CD4-positive, alpha-beta T cell (primary cell): ENCODE measurements at regions of chr9 and their contacts with region 1.

Region 1: GRCh38 chr9:97921959-97922724 is at the start of gene TRMO:
- DNase-seq: peak; percentile 96 to 100 (median 98)
- ATAC-seq: peak; percentile 76
- H3K4me3 ChIP-seq: peak within 1 kb of the TSS; percentile 76
- H3K4me3 Mint-ChIP-seq: peak within 1 kb of the TSS; percentile 88
- H3K27ac ChIP-seq: peak within 1 kb of the TSS; percentile 99
- H3K27ac Mint-ChIP-seq: peak within 1 kb of the TSS; percentile 96
- H3K4me1 ChIP-seq: peaks cover 43% of the 10 kb centered on the region
- H3K4me1 Mint-ChIP-seq: peaks cover 59% of the 10 kb centered on the region
- H3K27me3 ChIP-seq: no peaks in the 10 kb centered on the region
- H3K27me3 Mint-ChIP-seq: peaks cover 3% of the 10 kb centered on the region
- CTCF ChIP-seq: peak; percentile 67
- total RNA-seq, gene TRMO: 42.8 to 45.8 TPM

Region 2: DNA sequence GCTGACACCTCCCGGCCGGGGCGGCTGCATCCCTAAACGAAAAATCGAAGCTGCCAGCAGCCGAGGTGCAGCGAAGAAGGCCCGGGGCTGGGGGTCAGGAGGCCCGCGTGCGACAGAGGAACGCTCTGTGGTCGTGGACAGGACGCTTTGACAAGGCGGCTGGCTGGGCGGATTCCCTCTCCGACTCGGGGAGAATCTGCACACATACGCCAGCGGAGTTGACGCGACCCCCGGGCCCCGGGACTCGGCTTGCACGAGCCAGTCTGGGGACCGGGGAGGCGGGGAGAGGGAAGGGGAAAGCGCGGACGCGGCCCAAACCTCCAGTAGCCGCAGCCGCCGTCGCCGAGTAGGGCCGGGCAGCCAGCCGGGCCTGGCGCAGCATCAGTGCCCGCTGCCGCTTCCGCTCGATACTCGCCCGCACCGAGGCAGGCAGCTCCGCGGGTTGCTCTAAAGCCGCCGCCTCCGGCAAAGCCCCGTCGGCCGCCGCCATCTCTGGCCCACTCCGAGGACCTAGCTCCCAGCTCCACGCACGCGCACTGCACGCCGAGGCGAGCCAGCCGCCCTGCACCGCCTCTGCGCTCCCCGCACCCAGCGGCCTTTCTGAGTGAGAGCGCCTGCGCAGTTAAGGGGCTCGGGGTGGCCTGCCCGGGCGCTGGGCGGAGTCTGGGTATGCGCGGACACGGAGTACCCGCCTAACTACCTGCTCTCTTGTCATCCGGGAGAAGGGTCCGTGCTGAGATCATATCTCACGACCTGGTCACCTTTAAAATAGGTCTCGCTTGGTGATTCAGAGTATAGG is 225.1 kb before region 1 on chr9 and contains the start of gene XPA:
- CTCF ChIA-PET with region 1: interaction called, 6 read pairs
- POLR2A ChIA-PET with region 1: interaction called, 25 read pairs
- intact Hi-C with region 1: no loop called
- DNase-seq: peak; percentile 94 to 99 (median 97)
- ATAC-seq: peak; percentile 92
- H3K4me3 ChIP-seq: peak within 1 kb of the TSS; percentile 83
- H3K4me3 Mint-ChIP-seq: peak within 1 kb of the TSS; percentile 87
- H3K27ac ChIP-seq: peak within 1 kb of the TSS; percentile 80 to 81
- H3K27ac Mint-ChIP-seq: peak within 1 kb of the TSS; percentile 86
- H3K4me1 ChIP-seq: peaks cover 26% of the 10 kb centered on the region
- H3K4me1 Mint-ChIP-seq: peaks cover 62% of the 10 kb centered on the region
- H3K27me3 ChIP-seq: no peaks in the 10 kb centered on the region
- H3K27me3 Mint-ChIP-seq: peaks cover 4% of the 10 kb centered on the region
- CTCF ChIP-seq: no peak
- total RNA-seq, gene XPA: 20.2 to 23.3 TPM

Region 3: DNA sequence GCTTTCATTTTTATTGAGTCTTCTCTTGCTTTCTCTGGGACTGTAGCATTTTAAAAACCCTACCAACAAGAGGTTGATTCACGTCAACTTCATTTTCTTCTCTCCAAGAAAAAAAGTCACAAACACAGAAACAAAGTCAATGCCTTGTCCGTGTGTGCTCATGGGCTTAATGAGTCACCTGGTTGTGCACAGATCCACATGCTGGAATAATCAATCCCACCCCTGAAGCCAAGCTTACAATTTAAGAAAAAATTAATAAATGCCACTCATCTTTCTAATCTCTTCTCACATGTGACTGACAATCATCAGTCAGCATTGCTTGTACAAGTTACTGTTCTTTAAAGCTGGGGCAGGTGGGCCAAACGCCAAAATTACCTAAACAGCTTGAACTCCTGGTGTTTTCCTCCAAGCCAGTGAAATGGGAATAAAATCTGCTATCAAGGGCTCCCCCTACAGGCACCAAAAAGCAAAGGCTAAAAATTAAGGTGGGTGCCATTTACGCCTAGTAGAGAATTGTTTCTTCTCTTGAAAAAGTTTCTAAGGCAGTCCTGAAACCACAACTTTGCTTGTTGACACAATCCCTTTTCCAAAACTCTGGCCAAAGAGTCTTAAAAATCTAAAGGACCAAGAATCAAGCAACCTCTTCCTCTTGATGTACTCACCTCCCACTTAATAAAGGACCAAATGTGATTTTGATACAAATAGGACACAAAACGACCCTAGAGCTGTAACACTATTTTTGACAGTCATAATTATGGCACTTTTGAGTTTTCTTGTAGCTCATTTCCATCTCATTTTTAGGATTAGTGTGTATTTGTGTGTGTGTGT is 21.2 kb before region 1 on chr9:
- CTCF ChIA-PET with region 1: interaction called, 221 read pairs
- POLR2A ChIA-PET with region 1: interaction called, 335 read pairs
- intact Hi-C with region 1: loop called (anchors 1 to 2 kb)
- DNase-seq: peak in 4 of 14 experiments; percentile 57 to 79 (median 70)
- ATAC-seq: no peak
- H3K4me3 ChIP-seq: no peak overlapping the region
- H3K4me3 Mint-ChIP-seq: peak overlapping the region; percentile 22
- H3K27ac ChIP-seq: peak overlapping the region in 1 of 2 donors; percentile 7
- H3K27ac Mint-ChIP-seq: peak overlapping the region; percentile 96
- H3K4me1 ChIP-seq: peaks cover 54% of the 10 kb centered on the region
- H3K4me1 Mint-ChIP-seq: peaks cover 71% of the 10 kb centered on the region
- H3K27me3 ChIP-seq: no peaks in the 10 kb centered on the region
- H3K27me3 Mint-ChIP-seq: no peaks in the 10 kb centered on the region
- CTCF ChIP-seq: peak; percentile 81

Region 4: DNA sequence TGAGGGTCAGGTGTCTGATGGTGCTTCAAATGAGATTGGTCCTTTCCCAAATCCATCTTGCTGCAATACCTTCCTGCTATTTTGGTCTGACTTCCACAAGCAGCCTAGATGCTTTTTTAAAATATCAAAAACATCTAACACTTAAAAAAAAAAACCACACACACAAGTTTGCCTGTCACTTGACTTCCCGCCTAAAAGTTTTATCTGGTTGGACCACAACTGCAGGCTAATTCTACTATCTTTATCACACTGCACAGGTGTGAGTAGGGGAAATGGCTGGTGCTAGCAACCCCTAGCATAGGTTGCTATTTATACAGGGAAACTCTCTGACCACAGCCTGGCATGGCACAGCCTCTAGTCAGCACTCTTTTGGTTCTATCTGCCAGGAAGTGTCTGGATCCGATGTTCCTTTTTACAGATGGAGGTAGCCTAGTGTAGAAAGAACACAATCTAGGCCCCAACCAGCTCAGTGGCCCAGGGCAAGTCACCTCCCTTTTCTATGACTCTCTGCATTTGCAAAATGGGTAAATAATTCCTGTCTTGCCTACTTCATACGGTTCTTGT is 16.0 kb after region 1 on chr9 and contains the start of gene HEMGN:
- CTCF ChIA-PET with region 1: interaction called, 8 read pairs
- POLR2A ChIA-PET with region 1: interaction called, 14 read pairs
- intact Hi-C with region 1: no loop called
- DNase-seq: peak in 9 of 14 experiments; percentile 16 to 87 (median 38)
- ATAC-seq: peak; percentile 98
- H3K4me3 ChIP-seq: no peak within 1 kb of the TSS
- H3K4me3 Mint-ChIP-seq: peak within 1 kb of the TSS; percentile 44
- H3K27ac ChIP-seq: peak within 1 kb of the TSS; percentile 18 to 57
- H3K27ac Mint-ChIP-seq: peak within 1 kb of the TSS; percentile 79
- H3K4me1 ChIP-seq: peaks cover 27% of the 10 kb centered on the region
- H3K4me1 Mint-ChIP-seq: peaks cover 57% of the 10 kb centered on the region
- H3K27me3 ChIP-seq: no peaks in the 10 kb centered on the region
- H3K27me3 Mint-ChIP-seq: no peaks in the 10 kb centered on the region
- CTCF ChIP-seq: no peak
- total RNA-seq, gene HEMGN: 0.30 to 0.34 TPM

Region 5: GRCh38 chr9:97982683-97983588 is 60.8 kb after region 1 on chr9 and contains the start of gene ANP32B:
- CTCF ChIA-PET with region 1: interaction called, 74 read pairs
- POLR2A ChIA-PET with region 1: interaction called, 181 read pairs
- intact Hi-C with region 1: loop called (anchors 1 kb)
- DNase-seq: peak; percentile 87 to 98 (median 94)
- ATAC-seq: peak; percentile 82
- H3K4me3 ChIP-seq: peak within 1 kb of the TSS; percentile 78
- H3K4me3 Mint-ChIP-seq: peak within 1 kb of the TSS; percentile 93
- H3K27ac ChIP-seq: peak within 1 kb of the TSS; percentile 78 to 88
- H3K27ac Mint-ChIP-seq: peak within 1 kb of the TSS; percentile 89
- H3K4me1 ChIP-seq: peaks cover 50% of the 10 kb centered on the region
- H3K4me1 Mint-ChIP-seq: peaks cover 73% of the 10 kb centered on the region
- H3K27me3 ChIP-seq: no peaks in the 10 kb centered on the region
- H3K27me3 Mint-ChIP-seq: no peaks in the 10 kb centered on the region
- CTCF ChIP-seq: peak; percentile 67
- total RNA-seq, gene ANP32B: 178 to 192 TPM

Region 6: DNA sequence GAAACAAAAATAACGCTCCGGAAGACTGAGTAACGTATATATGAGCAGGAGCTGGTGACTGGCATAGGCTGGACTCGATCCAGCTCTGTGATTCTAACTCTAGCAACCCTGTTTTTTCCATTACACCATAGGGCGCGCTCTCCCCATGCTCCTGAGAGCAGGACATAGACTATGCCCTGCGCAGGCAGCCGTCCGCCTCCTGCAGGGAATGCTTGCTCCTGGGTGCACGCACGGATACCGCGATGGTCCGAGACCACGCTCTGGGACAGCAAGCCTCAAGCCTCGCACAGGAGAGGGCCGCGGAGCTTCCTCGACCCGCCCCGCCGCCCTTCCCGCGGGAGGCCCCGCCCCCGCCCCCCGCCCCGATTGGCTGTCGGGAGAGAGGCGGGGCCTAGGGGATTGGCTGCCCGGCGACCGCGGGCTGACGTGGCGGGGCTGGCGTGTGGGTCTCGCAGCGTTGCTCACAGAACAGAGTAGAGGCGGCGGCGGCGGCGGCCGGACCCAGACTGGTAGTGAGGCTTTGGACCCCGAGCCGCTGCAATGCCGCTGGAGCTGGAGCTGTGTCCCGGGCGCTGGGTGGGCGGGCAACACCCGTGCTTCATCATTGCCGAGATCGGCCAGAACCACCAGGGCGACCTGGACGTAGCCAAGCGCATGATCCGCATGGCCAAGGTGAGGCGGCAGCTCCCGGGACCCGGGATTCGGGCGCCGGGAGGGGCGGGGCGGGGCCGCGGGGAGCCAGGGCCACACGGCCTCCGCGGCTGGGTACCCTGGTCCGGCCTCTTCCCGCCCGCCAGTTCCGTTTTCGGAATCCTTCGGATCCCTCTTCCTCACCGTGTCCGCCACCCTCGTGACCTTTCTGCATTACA is 134.4 kb after region 1 on chr9 and contains the start of gene NANS:
- CTCF ChIA-PET with region 1: no interaction called
- POLR2A ChIA-PET with region 1: interaction called, 28 read pairs
- intact Hi-C with region 1: loop called in 1 of 2 experiments (anchors 5 kb)
- DNase-seq: peak; percentile 81 to 95 (median 88)
- ATAC-seq: peak; percentile 92
- H3K4me3 ChIP-seq: peak within 1 kb of the TSS; percentile 71
- H3K4me3 Mint-ChIP-seq: peak within 1 kb of the TSS; percentile 98
- H3K27ac ChIP-seq: peak within 1 kb of the TSS; percentile 64 to 75
- H3K27ac Mint-ChIP-seq: peak within 1 kb of the TSS; percentile 93
- H3K4me1 ChIP-seq: peaks cover 27% of the 10 kb centered on the region
- H3K4me1 Mint-ChIP-seq: peaks cover 28% of the 10 kb centered on the region
- H3K27me3 ChIP-seq: no peaks in the 10 kb centered on the region
- H3K27me3 Mint-ChIP-seq: no peaks in the 10 kb centered on the region
- CTCF ChIP-seq: no peak
- total RNA-seq, gene NANS: 70.5 to 74.0 TPM

Region 7: DNA sequence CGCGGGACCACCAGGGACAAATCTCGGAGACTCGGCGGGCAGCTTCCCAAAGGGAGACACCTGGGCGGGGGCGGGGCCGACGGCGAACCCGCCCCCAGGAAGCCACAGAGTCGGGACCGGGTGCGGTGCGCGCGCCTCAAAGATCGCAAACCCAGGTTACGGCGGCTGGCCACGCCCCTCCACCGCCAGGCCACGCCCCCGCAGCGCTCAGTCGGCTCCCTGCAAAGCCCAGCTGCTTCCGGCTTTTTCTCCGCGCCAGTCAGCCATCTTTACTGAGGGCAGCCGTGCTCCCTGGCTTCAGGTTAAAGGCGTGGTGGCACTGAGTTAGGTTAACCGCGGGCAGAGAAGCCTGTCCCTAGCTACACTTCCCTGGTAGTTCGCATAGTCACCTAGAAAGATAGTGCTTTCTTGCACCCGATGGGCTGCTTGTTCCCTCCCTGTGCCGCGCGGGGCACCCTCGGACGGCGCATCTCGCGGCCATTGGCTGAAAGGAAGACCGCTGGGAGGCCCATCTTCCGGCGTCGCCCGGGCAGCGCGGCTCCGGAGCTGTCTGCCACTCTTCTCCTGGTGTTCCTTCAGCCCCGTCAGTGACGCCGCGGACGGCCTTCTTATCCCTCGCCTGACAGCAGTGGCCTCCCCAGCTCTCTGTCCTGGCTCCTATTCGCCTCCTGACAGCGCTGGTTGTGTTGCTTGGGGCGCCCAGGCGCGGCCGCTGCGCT is 333.6 kb after region 1 on chr9 and contains the start of gene TBC1D2:
- CTCF ChIA-PET with region 1: interaction called, 5 read pairs
- POLR2A ChIA-PET with region 1: interaction called, 98 read pairs
- intact Hi-C with region 1: loop called in 1 of 2 experiments (anchors 2 kb)
- DNase-seq: peak; percentile 95 to 99 (median 98)
- ATAC-seq: peak; percentile 86
- H3K4me3 ChIP-seq: peak within 1 kb of the TSS; percentile 81
- H3K4me3 Mint-ChIP-seq: peak within 1 kb of the TSS; percentile 99
- H3K27ac ChIP-seq: peak within 1 kb of the TSS; percentile 79 to 83
- H3K27ac Mint-ChIP-seq: peak within 1 kb of the TSS; percentile 92
- H3K4me1 ChIP-seq: peaks cover 39% of the 10 kb centered on the region
- H3K4me1 Mint-ChIP-seq: peaks cover 34% of the 10 kb centered on the region
- H3K27me3 ChIP-seq: no peaks in the 10 kb centered on the region
- H3K27me3 Mint-ChIP-seq: no peaks in the 10 kb centered on the region
- CTCF ChIP-seq: peak; percentile 11
- total RNA-seq, gene TBC1D2: 2.9 to 4.0 TPM